Activated B cell treated with CpG ODN at 0.5 μM for 24 hours (primary cell): ENCODE measurements at regions of chr22 and their contacts with region 1.

Region 1: GRCh38 chr22:22431271-22432220 is 77.0 kb downstream of the ZNF280B start:
- DNase-seq: peak; percentile 60
- ATAC-seq: peak; percentile 89
- H3K4me3 Mint-ChIP-seq: no peak overlapping the region
- H3K27ac Mint-ChIP-seq: peak overlapping the region; percentile 71
- H3K4me1 Mint-ChIP-seq: peaks cover 59% of the 10 kb centered on the region
- H3K27me3 Mint-ChIP-seq: no peaks in the 10 kb centered on the region
- CTCF ChIP-seq: no peak

Region 2: DNA sequence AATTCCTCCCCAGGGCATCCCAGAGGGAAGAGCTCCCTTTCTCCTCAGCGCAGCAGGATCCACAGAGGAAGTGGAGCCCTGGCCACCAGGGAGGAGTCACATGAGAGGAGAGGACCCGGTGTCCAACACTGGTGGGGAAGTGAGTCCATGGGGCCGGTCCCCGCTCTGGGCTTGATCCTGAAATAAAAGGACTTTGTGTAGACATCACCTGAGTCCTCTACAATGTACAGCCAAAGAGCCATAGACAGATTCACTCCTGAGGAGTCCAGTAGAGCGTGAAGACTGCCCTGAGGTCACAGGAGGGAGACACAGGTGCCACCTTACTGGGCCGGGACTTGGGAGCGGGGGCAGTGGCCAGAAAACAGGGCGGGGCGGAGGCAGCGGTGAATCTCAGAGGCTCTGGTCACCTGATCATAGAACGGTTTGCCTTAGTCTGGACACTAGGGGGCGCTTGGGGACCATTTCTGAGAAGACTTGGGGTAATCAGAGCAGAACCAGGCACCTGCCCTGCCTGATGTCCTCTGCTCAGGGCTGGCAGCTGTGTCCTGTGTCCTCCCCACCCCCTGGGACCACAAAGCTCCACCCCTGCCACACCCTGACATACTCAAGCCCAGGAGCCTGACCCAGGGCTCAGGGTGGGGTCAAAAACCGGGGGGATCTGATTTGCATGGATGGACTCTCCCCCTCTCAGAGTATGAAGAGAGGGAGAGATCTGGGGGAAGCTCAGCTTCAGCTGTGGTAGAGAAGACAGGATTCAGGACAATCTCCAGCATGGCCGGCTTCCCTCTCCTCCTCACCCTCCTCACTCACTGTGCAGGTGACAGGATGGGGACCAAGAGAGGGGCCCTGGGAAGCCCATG is 74.3 kb before region 1 on chr22:
- CTCF ChIA-PET with region 1: interaction called, 4 read pairs
- POLR2A ChIA-PET with region 1: no interaction called
- intact Hi-C with region 1: loop called (anchors 1 kb)
- DNase-seq: peak; percentile 74
- ATAC-seq: peak; percentile 87
- H3K4me3 Mint-ChIP-seq: peak overlapping the region; percentile 65
- H3K27ac Mint-ChIP-seq: peak overlapping the region; percentile 79
- H3K4me1 Mint-ChIP-seq: peaks cover 55% of the 10 kb centered on the region
- H3K27me3 Mint-ChIP-seq: no peaks in the 10 kb centered on the region
- CTCF ChIP-seq: no peak

Region 3: DNA sequence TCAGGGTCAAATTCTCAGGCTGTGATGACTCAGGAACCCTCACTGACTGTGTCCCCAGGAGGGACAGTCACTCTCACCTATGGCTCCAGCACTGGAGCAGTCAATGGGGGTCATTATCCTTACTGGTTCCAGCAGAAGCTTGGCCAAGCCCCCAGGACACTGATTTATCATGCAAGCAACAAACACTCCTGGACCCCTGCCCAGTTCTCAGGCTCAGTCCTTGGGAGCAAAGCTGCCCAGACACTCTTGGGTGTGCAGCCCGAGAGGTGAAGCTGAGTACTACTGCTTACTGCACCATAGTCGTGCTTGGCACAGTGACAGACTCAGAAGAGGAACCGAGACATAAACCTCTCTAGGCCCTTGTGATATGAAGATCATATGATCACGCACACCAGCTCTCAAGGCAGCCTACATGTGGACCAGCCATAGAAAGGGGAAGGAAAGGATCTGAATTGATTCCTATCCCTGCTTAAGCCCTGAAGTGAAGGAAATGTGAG is 18.8 kb after region 1 on chr22:
- CTCF ChIA-PET with region 1: interaction called, 20 read pairs
- POLR2A ChIA-PET with region 1: interaction called, 5 read pairs
- intact Hi-C with region 1: loop called (anchors 2 kb)
- DNase-seq: peak; percentile 46
- ATAC-seq: peak; percentile 97
- H3K4me3 Mint-ChIP-seq: peak overlapping the region; percentile 63
- H3K27ac Mint-ChIP-seq: peak overlapping the region; percentile 90
- H3K4me1 Mint-ChIP-seq: peaks cover 38% of the 10 kb centered on the region
- H3K27me3 Mint-ChIP-seq: no peaks in the 10 kb centered on the region
- CTCF ChIP-seq: no peak

Region 4: GRCh38 chr22:22463855-22464540 is 32.5 kb after region 1 on chr22:
- CTCF ChIA-PET with region 1: interaction called, 30 read pairs
- POLR2A ChIA-PET with region 1: no interaction called
- intact Hi-C with region 1: loop called (anchors 1 kb)
- DNase-seq: no peak
- ATAC-seq: peak; percentile 61
- H3K4me3 Mint-ChIP-seq: peak overlapping the region; percentile 24
- H3K27ac Mint-ChIP-seq: peak overlapping the region; percentile 61
- H3K4me1 Mint-ChIP-seq: peaks cover 19% of the 10 kb centered on the region
- H3K27me3 Mint-ChIP-seq: peaks cover 4% of the 10 kb centered on the region
- CTCF ChIP-seq: peak; percentile 76

Region 5: DNA sequence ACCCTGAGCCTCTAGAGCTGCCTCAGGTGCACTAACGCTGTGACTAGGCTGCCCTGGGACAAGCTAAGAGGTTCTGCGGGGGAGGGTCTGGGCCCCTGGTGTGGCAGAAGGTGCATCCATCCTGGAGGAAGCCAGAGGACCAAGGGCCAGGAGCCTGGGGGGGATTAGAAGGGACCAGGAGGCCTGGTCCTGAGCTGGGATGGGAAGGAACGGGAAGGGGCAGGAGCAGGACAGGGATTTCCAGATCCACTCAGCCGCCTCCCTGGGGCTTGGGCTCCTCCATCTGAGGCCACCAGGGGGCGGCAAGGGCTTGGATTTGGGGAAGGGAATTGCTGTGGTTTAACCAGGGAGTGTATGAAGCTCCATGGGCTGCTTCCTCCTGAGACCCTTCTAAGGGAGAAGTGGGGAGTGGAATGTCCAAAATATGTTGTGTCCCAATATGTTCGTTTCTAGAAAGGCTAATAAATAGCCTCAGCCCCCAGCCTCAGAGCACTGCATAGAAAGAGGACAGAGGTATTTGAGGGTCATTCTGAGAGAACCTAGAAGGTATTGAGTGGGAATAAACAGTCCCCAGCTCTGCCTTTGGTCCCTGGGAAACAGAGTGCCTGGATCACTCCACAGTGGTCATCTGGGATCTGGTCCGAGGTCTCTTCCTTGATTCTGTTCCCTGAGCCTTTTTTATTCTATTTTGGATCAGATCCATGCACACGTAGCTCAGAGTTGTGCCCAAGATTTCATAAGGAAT is 144.9 kb after region 1 on chr22:
- CTCF ChIA-PET with region 1: interaction called, 10 read pairs
- POLR2A ChIA-PET with region 1: no interaction called
- intact Hi-C with region 1: loop called (anchors 2 kb)
- DNase-seq: no peak
- ATAC-seq: peak; percentile 62
- H3K4me3 Mint-ChIP-seq: no peak overlapping the region
- H3K27ac Mint-ChIP-seq: no peak overlapping the region
- H3K4me1 Mint-ChIP-seq: peaks cover 12% of the 10 kb centered on the region
- H3K27me3 Mint-ChIP-seq: peaks cover 2% of the 10 kb centered on the region
- CTCF ChIP-seq: peak; percentile 20

Region 6: DNA sequence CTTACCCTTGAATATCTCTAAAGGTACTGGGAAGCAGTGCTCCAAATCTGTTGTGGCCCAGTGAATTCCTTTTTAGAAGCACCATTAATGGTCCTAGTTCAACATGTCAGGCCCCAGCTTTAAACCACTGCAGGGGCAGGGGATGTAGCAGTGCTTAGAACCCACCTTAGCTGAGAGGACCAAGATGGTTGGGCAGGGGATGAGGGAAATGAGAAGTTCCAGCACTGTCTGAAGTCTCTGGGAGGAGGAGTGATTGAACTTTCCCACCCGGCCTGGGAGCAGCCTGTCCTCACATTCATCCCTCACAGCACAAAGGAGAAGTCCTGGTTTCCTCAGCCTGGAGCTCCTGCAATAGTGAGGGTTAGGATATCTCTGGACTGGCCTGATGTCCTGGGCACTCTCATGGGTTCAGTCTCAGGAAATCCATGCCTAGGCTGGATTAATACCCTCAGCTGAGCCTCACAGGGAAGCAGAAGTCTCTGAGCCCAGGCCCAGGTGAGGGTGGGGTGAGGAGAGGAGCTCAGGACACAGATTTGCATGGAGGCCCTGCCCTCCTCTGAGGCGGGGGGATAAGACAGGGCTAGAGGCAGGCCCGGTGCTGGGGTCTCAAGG is 156.1 kb after region 1 on chr22:
- CTCF ChIA-PET with region 1: interaction called, 23 read pairs
- POLR2A ChIA-PET with region 1: no interaction called
- intact Hi-C with region 1: loop called (anchors 1 kb)
- DNase-seq: no peak
- ATAC-seq: no peak
- H3K4me3 Mint-ChIP-seq: no peak overlapping the region
- H3K27ac Mint-ChIP-seq: no peak overlapping the region
- H3K4me1 Mint-ChIP-seq: peaks cover 42% of the 10 kb centered on the region
- H3K27me3 Mint-ChIP-seq: no peaks in the 10 kb centered on the region
- CTCF ChIP-seq: no peak